ENCODE measurements at regions of chr5 and their contacts with region 1.

Region 1: DNA sequence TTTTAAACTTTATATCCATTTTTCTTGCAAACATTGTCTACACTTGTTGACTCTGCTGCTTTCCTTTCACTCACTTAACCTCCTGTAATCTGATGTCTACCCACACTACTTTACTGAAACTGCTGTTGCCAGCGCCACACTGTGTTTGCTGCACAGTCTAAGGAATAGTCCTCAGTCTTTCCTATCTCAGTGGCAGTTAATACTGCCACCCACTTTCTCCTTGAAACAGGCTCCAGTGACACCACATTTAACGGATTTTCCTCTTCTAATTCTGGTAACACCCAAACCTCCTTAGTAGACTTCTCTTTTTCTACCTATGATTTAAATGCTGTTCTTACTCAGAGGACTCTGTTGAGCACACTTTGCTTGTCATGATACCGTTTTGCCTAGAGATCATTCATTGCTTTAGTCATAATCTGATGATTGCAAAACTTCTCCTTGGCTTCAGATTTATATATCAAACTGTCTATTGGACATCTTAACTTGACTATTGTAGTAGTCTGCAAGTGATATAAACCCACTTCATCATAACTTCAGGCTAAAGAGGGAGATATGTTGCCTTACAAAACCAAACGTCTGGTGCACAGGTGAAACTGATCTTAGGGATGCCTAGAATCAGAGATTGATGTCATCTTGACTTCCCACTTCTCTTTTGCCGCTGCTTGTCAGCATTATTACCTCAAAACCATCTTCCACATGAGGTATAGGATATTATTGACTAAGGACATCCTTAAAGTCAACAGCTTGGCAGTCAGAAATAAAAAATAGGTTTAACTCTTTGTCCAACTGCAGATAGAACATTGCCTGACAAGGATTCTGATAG is 94.1 kb downstream of the CDC42SE2 start:
- DNase-seq: peak; percentile 80
- H3K4me3 Mint-ChIP-seq: peak overlapping the region; percentile 49
- H3K27ac Mint-ChIP-seq: peak overlapping the region; percentile 81
- H3K4me1 Mint-ChIP-seq: peaks cover 45% of the 10 kb centered on the region
- H3K27me3 Mint-ChIP-seq: no peaks in the 10 kb centered on the region

Region 2: GRCh38 chr5:130237721-130238120 is 1120.2 kb before region 1 on chr5:
- intact Hi-C with region 1: no loop called
- DNase-seq: no peak
- H3K4me3 Mint-ChIP-seq: no peak overlapping the region
- H3K27ac Mint-ChIP-seq: no peak overlapping the region
- H3K4me1 Mint-ChIP-seq: no peaks in the 10 kb centered on the region
- H3K27me3 Mint-ChIP-seq: no peaks in the 10 kb centered on the region

Region 3: DNA sequence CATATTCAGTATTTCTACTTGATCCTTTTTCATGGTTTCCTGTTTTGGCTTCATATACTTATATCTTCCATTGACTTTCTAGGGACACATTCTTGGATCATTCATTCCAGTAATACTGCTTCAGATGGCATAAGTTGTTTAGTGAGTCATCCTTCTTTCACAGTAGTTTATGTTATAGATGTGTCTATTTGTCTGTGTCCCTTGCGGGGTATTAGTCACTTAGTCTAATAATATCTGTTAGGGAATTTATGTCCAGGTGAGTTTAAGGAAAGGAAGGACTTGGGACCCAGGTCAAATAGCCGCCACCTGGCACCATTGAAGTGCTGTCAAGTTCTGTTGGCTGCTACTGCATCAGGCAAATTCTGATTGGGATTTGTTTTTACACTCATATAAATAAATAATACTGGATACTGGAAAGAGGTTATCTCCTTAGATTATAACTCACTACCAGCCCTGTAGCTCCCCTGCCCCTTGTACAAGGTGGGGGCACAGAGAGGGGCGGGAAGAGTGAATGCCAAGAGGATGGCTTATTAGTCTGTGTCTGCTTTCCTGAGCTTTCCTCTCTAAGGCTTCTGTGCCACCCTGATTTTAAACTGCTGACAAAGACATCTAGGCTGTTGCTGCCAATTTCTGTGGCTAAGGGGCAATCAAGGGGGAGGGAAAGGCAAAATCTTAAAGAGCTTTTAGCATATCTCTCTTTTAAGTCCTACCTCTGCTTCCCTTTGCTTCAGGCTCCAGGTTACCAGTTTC is 29.2 kb before region 1 on chr5:
- intact Hi-C with region 1: loop called (anchors 2 kb)
- DNase-seq: no peak
- H3K4me3 Mint-ChIP-seq: no peak overlapping the region
- H3K27ac Mint-ChIP-seq: peak overlapping the region; percentile 74
- H3K4me1 Mint-ChIP-seq: peaks cover 38% of the 10 kb centered on the region
- H3K27me3 Mint-ChIP-seq: no peaks in the 10 kb centered on the region